CD8-positive, alpha-beta memory T cell (primary cell): ENCODE measurements at regions of chr22 and their contacts with region 1.

Region 1: DNA sequence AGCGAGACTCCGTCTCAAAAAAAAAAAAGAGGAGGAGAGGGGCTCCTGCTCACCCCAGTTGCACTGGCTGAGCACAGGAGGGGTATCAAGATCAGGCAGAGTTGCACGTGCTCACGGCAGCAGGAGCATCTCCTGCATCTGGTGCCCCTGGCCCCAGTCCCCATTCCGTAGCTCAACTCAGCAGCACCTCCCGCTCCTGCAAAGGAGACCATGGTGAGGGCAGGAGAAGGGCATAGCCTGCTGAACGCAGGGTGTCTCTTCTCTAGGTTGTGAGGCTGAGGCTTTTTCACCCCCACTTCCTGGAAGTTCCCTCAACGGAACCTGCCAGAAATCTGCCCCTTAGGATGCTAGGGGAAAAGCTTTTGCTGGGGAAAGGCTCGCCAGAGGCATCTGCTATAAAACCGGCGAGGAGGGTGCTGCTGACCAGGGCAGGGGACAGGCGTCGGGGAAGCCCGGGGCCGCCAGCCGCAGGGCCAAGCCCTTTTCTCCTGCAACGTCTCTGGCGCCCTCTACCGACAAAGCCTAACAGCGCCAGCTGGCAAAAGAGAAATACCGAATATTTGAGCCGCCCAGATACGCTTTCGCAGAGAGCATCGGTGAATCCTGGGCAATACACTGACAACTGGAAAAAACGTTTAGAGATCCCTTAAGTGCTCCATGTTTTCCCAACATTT is 1.0 kb upstream of the PPP6R2 start:
- DNase-seq: peak; percentile 81 to 91 (median 86)
- H3K4me3 ChIP-seq: peak overlapping the region; percentile 44
- H3K4me3 Mint-ChIP-seq: peak overlapping the region; percentile 85 to 96 (median 89)
- H3K27ac ChIP-seq: peak overlapping the region; percentile 56
- H3K27ac Mint-ChIP-seq: peak overlapping the region; percentile 88 to 96 (median 94)
- H3K4me1 ChIP-seq: peaks cover 17% of the 10 kb centered on the region
- H3K4me1 Mint-ChIP-seq: peaks cover 6 to 12% (median 11%) of the 10 kb centered on the region in 3 donors
- H3K27me3 ChIP-seq: no peaks in the 10 kb centered on the region
- H3K27me3 Mint-ChIP-seq: no peaks in the 10 kb centered on the region

Region 2: GRCh38 chr22:50058906-50059880 is 282.9 kb before region 1 on chr22:
- CTCF ChIA-PET with region 1: no interaction called
- POLR2A ChIA-PET with region 1: no interaction called
- DNase-seq: no peak
- H3K4me3 ChIP-seq: no peak overlapping the region
- H3K4me3 Mint-ChIP-seq: no peak overlapping the region
- H3K27ac ChIP-seq: no peak overlapping the region
- H3K27ac Mint-ChIP-seq: no peak overlapping the region
- H3K4me1 ChIP-seq: no peaks in the 10 kb centered on the region
- H3K4me1 Mint-ChIP-seq: peaks cover 0 to 12% (median 0%) of the 10 kb centered on the region in 3 donors
- H3K27me3 ChIP-seq: peaks cover 4% of the 10 kb centered on the region
- H3K27me3 Mint-ChIP-seq: peaks cover 15 to 39% of the 10 kb centered on the region in 2 donors

Region 3: GRCh38 chr22:50285568-50286229 is 56.4 kb before region 1 on chr22:
- CTCF ChIA-PET with region 1: no interaction called
- POLR2A ChIA-PET with region 1: no interaction called
- DNase-seq: no peak
- H3K4me3 ChIP-seq: no peak overlapping the region
- H3K4me3 Mint-ChIP-seq: no peak overlapping the region
- H3K27ac ChIP-seq: no peak overlapping the region
- H3K27ac Mint-ChIP-seq: no peak overlapping the region
- H3K4me1 ChIP-seq: no peaks in the 10 kb centered on the region
- H3K4me1 Mint-ChIP-seq: no peaks in the 10 kb centered on the region
- H3K27me3 ChIP-seq: no peaks in the 10 kb centered on the region
- H3K27me3 Mint-ChIP-seq: no peaks in the 10 kb centered on the region

Region 4: DNA sequence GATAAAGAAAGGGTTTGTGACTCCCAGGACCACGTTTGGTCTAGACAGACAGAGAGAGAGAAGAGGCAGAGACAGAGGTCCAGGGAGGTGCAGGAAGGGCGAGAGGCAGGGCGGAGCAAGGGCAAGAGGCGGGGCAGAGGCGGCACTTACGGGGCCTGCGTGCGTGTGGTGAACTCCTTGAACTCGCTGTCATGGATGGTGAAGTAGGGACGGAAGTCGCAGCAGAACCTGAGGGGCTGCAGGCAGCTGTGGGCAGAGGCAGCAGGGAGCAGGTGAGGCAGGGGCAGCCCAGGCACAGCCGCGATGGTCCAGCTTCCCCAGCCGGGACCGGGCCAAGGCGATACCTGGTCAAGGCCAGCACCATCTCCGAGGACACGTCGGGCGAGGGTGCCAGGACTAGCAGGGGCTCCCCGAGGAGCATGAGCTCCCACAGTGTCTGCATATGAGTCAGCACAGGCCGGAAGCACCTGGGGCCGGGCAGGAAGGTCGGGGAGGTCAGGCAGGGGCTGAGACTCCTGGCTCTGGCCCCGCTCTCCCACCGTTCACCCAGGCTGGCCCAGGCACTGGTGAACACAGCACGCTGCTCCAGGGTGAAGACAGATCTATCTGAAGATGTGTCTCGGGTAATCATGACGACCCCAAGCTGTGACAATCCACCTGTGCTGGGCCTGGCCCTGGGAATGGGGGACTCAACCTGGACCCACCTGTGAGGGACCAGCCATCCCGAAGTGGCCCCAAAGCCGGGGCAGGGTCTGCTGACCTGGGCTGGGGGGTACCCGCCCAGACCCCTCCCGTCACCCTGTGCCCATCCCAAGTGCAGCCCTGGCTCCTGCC is 27.4 kb before region 1 on chr22:
- CTCF ChIA-PET with region 1: interaction called, 14 read pairs
- POLR2A ChIA-PET with region 1: no interaction called
- DNase-seq: peak; percentile 52 to 79 (median 66)
- H3K4me3 ChIP-seq: peak overlapping the region; percentile 48
- H3K4me3 Mint-ChIP-seq: peak overlapping the region; percentile 74 to 90 (median 81)
- H3K27ac ChIP-seq: peak overlapping the region; percentile 45
- H3K27ac Mint-ChIP-seq: peak overlapping the region; percentile 65 to 97 (median 92)
- H3K4me1 ChIP-seq: peaks cover 17% of the 10 kb centered on the region
- H3K4me1 Mint-ChIP-seq: peaks cover 11 to 21% (median 12%) of the 10 kb centered on the region in 3 donors
- H3K27me3 ChIP-seq: no peaks in the 10 kb centered on the region
- H3K27me3 Mint-ChIP-seq: no peaks in the 10 kb centered on the region

Region 5: GRCh38 chr22:50361688-50362087 is 19.6 kb after region 1 on chr22:
- CTCF ChIA-PET with region 1: interaction called, 13 read pairs
- POLR2A ChIA-PET with region 1: interaction called, 5 read pairs
- DNase-seq: peak in 2 of 5 donors; percentile 10 to 51
- H3K4me3 ChIP-seq: no peak overlapping the region
- H3K4me3 Mint-ChIP-seq: peak overlapping the region in 6 of 7 donors; percentile 34 to 67 (median 54)
- H3K27ac ChIP-seq: no peak overlapping the region
- H3K27ac Mint-ChIP-seq: peak overlapping the region; percentile 77 to 97 (median 89)
- H3K4me1 ChIP-seq: peaks cover 33% of the 10 kb centered on the region
- H3K4me1 Mint-ChIP-seq: peaks cover 55 to 77% (median 72%) of the 10 kb centered on the region in 3 donors
- H3K27me3 ChIP-seq: no peaks in the 10 kb centered on the region
- H3K27me3 Mint-ChIP-seq: no peaks in the 10 kb centered on the region

Region 6: DNA sequence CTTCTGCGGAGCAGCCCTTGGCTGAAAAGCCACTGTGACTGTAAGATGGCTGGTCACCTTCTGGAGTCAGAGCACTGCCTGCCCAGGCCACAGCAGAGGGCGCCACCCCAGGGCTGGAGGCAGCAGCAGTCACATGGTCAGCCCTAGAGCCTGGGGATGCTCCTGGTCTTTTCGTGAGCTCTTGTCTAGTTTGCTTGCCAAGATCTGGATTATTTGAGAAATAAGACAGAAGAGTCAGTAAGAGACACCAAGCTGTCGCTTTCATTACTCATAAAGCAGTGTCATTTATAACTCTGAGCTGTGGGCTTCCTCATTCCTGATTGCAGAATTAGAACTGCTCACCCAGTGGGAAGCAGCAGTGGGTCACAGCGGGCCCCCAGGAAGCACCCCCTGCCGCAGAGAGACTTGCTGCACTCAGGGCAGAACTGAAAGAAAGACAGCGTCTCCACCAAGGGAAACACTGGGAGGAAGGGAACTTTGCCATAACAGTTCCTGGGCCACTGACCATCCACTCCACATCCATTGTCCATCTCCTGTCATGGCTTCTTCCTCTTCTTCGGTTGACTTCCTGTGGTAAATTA is 57.7 kb after region 1 on chr22:
- CTCF ChIA-PET with region 1: no interaction called
- POLR2A ChIA-PET with region 1: no interaction called
- DNase-seq: peak in 2 of 5 donors; percentile 9 to 13
- H3K4me3 ChIP-seq: no peak overlapping the region
- H3K4me3 Mint-ChIP-seq: peak overlapping the region in 3 of 7 donors; percentile 3 to 33 (median 12)
- H3K27ac ChIP-seq: no peak overlapping the region
- H3K27ac Mint-ChIP-seq: peak overlapping the region; percentile 62 to 95 (median 84)
- H3K4me1 ChIP-seq: peaks cover 5% of the 10 kb centered on the region
- H3K4me1 Mint-ChIP-seq: peaks cover 37 to 42% (median 39%) of the 10 kb centered on the region in 3 donors
- H3K27me3 ChIP-seq: no peaks in the 10 kb centered on the region
- H3K27me3 Mint-ChIP-seq: no peaks in the 10 kb centered on the region

Region 7: GRCh38 chr22:50545522-50546325 is 203.6 kb after region 1 on chr22 and contains the start of gene KLHDC7B:
- CTCF ChIA-PET with region 1: no interaction called
- POLR2A ChIA-PET with region 1: no interaction called
- DNase-seq: peak in 1 of 5 donors; percentile 47
- H3K4me3 ChIP-seq: peak within 1 kb of the TSS; percentile 77
- H3K4me3 Mint-ChIP-seq: peak within 1 kb of the TSS; percentile 51 to 85 (median 71)
- H3K27ac ChIP-seq: peak within 1 kb of the TSS; percentile 33
- H3K27ac Mint-ChIP-seq: peak within 1 kb of the TSS; percentile 77 to 99 (median 91)
- H3K4me1 ChIP-seq: peaks cover 46% of the 10 kb centered on the region
- H3K4me1 Mint-ChIP-seq: peaks cover 36 to 56% (median 41%) of the 10 kb centered on the region in 3 donors
- H3K27me3 ChIP-seq: no peaks in the 10 kb centered on the region
- H3K27me3 Mint-ChIP-seq: no peaks in the 10 kb centered on the region
- total RNA-seq, gene KLHDC7B: 5.1 to 6.2 TPM